Endothelial cell of umbilical vein (primary cell): ENCODE measurements at regions of chr3 and their contacts with region 1.

Region 1: GRCh38 chr3:14482271-14482721 is 57.8 kb downstream of the GRIP2 start:
- DNase-seq: peak; percentile 87
- H3K4me3 ChIP-seq: no peak overlapping the region
- H3K27ac ChIP-seq: peak overlapping the region; percentile 9
- H3K4me1 ChIP-seq: peaks cover 17% of the 10 kb centered on the region
- H3K27me3 ChIP-seq: no peaks in the 10 kb centered on the region
- CTCF ChIP-seq: no peak
- POLR2A ChIP-seq: no peak

Region 2: GRCh38 chr3:13878281-13879039 is 603.8 kb before region 1 on chr3:
- CTCF ChIA-PET with region 1: no interaction called
- POLR2A ChIA-PET with region 1: no interaction called
- dilution Hi-C with region 1: no loop called
- intact Hi-C with region 1: no loop called
- DNase-seq: no peak
- H3K4me3 ChIP-seq: no peak overlapping the region
- H3K27ac ChIP-seq: no peak overlapping the region
- H3K4me1 ChIP-seq: no peaks in the 10 kb centered on the region
- H3K27me3 ChIP-seq: peaks cover 41 to 48% of the 10 kb centered on the region in 2 experiments
- CTCF ChIP-seq: no peak
- POLR2A ChIP-seq: no peak

Region 3: DNA sequence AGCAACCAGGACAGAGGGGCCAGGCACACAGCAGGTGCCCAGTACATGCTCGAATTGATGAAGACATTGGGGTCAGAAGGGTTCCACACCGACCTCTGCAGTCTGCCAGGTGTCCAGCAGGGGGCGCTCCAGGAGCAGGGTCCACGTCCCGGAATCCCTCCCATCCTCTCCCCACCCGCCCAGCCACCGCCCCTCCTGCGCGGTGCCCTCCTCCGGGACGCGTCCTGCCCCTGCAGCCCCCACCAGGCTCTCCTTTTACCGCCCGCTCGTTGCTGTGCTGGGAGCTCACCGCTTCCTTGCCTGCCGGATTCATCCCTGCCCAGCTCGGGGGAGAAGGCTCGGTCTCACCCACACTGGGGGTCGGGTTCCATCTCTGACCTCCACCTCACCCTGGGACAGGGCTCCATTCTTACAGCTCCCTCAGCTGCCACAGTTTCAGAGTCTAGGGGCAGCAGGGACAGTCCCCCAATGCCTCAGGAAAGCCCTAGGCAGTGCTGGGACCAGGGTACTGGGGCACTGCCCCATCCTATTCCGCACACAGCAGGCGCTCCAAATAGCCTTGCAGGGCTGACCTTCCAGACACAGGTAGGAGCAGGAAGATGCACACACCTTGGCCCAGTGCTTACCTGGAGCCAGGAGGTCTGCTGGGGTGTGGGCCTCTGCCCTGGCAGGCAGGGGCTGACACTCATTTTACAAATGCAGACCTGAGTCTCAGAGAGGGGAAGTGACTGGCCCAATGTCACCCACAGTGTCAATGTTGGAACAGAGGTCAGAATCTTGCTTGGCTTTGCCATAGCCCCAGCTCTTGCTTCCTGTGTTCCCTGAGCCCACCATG is 26.9 kb after region 1 on chr3:
- CTCF ChIA-PET with region 1: interaction called, 10 read pairs
- POLR2A ChIA-PET with region 1: no interaction called
- dilution Hi-C with region 1: no loop called
- intact Hi-C with region 1: no loop called
- DNase-seq: peak; percentile 30
- H3K4me3 ChIP-seq: no peak overlapping the region
- H3K27ac ChIP-seq: no peak overlapping the region
- H3K4me1 ChIP-seq: no peaks in the 10 kb centered on the region
- H3K27me3 ChIP-seq: no peaks in the 10 kb centered on the region
- CTCF ChIP-seq: peak; percentile 66 to 94
- POLR2A ChIP-seq: no peak

Region 4: DNA sequence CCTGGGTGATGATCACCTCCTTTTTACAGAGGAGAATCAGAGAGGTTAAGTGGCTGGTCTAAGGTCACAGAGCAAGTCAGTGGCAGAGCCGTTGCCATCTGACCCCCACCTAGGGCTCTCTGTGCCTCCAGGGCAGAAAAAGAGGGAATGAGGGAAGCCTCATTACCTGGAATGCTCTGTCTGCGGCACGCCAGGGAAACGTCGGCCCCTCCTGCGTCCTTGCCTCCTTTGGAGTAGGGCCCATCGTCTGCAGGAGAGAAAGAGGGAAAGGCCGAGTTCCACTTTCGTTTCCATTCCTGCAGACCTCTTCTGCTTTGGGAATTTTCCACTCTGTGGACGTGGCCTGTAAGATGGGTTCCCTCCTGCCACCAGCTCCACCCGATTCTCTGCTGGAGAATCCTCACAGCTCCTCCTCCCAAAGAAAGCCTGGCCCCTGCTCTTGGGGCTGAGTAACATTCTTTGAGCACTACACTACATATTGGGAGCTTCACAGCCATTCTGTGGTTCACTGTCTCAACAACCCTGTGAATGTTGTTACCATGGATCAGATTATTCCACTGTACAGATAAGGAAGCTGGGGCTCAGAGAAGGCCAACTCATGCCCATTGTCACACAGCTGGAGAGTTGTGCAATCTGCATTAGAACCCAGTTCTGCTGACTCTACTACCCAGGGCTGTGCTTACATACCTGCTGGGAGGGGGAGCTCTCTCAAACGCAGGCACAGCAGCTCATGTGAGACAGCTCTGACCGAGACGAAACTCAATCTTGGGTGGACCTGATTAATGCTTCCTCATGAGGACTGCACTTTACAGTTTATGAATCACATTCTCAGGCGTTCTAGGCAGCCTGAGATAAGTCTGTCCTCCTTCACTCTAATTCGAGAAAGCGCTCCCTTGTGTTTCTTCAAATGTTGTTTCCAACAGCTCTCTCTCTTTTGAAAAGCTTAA is 43.7 kb after region 1 on chr3:
- CTCF ChIA-PET with region 1: no interaction called
- POLR2A ChIA-PET with region 1: no interaction called
- dilution Hi-C with region 1: no loop called
- intact Hi-C with region 1: no loop called
- DNase-seq: no peak
- H3K4me3 ChIP-seq: no peak overlapping the region
- H3K27ac ChIP-seq: no peak overlapping the region
- H3K4me1 ChIP-seq: no peaks in the 10 kb centered on the region
- H3K27me3 ChIP-seq: peaks cover 1 to 4% of the 10 kb centered on the region in 2 experiments
- CTCF ChIP-seq: no peak
- POLR2A ChIP-seq: no peak

Region 5: GRCh38 chr3:14793126-14793857 is 311.0 kb after region 1 on chr3:
- CTCF ChIA-PET with region 1: no interaction called
- POLR2A ChIA-PET with region 1: no interaction called
- dilution Hi-C with region 1: no loop called
- intact Hi-C with region 1: no loop called
- DNase-seq: peak; percentile 32
- H3K4me3 ChIP-seq: no peak overlapping the region
- H3K27ac ChIP-seq: no peak overlapping the region
- H3K4me1 ChIP-seq: no peaks in the 10 kb centered on the region
- H3K27me3 ChIP-seq: no peaks in the 10 kb centered on the region
- CTCF ChIP-seq: no peak
- POLR2A ChIP-seq: no peak